A673 (cell line): ENCODE measurements at regions of chr11 and their contacts with region 1.

Region 1: GRCh38 chr11:47516984-47517853 is 35.7 kb downstream of the CELF1 start:
- DNase-seq: no peak
- H3K4me3 ChIP-seq: no peak overlapping the region
- H3K27ac ChIP-seq: no peak overlapping the region
- H3K4me1 ChIP-seq: peaks cover 46% of the 10 kb centered on the region
- H3K27me3 ChIP-seq: no peaks in the 10 kb centered on the region
- CTCF ChIP-seq: no peak

Region 2: GRCh38 chr11:47552566-47553416 is 35.6 kb after region 1 on chr11 and contains the start of gene CELF1:
- CTCF ChIA-PET with region 1: interaction called, 4 read pairs
- POLR2A ChIA-PET with region 1: no interaction called
- intact Hi-C with region 1: loop called (anchors 1 kb)
- DNase-seq: peak; percentile 100
- H3K4me3 ChIP-seq: peak within 1 kb of the TSS; percentile 63
- H3K27ac ChIP-seq: peak within 1 kb of the TSS; percentile 91
- H3K4me1 ChIP-seq: peaks cover 21% of the 10 kb centered on the region
- H3K27me3 ChIP-seq: no peaks in the 10 kb centered on the region
- CTCF ChIP-seq: peak; percentile 93
- total RNA-seq, gene CELF1: 246 and 257 TPM in 2 replicates

Region 3: DNA sequence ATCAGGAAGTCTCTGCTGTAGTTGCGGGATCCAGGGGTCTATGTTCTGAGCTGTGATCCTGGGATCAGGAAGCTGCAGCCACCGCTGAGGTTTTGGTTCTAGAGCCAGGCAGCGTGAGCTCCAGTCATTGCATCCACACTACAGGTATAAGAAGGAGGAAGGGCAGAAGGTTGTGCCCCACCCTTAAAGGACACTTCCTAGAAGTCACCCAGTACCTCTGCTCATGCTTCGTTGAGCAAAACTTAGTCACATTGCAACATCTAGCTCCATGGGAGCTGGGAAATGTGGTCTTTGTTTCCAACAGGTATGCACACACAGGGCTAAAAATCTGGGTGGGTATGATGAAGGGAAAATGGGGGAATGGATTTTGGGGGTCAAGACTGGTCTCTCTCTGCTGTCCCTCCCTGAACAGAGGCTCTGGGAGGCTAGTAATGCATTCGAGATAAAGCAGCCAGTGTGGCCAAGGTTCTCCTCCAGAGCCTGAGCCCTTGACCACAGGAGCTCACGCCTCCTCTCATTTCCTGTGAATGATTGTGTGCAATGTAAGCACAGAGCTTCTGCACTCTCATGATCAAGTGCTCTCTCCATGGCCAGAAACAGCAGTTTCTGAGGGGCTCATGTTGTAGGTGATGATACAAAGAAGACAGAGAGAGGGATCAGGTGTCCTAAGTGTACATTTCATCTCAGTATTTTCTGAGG is 612.6 kb after region 1 on chr11:
- CTCF ChIA-PET with region 1: no interaction called
- POLR2A ChIA-PET with region 1: no interaction called
- intact Hi-C with region 1: no loop called
- DNase-seq: no peak
- H3K4me3 ChIP-seq: no peak overlapping the region
- H3K27ac ChIP-seq: no peak overlapping the region
- H3K4me1 ChIP-seq: no peaks in the 10 kb centered on the region
- H3K27me3 ChIP-seq: no peaks in the 10 kb centered on the region
- CTCF ChIP-seq: no peak